Esophagus squamous epithelium (tissue), 5 donors: ENCODE measurements at regions of chr3 and their contacts with region 1.

Region 1: DNA sequence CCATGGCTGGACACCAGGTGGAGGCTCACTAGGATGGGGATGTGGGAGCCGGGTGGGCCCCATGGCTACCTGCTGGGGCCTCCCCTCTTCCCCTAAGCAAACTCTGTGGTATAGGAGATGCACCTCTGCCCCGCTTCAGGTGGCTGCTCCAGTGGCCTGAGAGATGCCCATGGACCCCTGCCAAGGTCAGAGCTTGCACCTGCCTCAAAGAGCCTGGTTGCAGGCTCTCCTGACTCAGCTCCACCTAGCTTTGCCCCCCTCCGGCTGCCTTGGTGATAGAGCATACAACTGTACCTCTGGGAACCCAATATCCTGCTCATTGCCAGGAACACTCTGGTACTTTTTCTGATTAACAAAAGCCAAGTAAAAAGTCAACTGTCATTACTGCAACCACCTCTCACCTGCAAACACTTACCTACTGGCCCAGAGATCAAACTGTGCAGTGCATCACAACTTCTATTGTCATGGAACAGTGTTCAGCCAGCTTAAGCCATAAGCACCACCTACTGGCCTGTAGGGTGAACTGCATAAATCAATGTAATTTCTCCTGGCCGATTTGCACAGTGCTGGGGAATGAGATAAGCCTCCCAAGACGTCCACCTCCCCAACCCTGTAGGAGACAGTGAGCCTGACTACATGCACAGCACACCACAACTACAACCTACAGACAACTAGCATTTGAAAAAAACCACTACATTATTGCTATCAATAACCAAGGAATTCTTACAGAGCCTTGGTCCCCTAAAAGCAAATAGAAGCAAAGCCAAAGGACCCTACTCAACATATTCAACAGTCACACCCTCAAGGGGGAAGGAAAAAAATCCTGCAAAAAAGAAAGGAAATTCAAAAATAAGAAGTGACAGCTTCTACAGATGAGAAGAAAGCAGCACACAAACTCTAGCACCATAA is 352.4 kb upstream of the ARHGEF26 start:
- DNase-seq: no peak
- H3K4me3 ChIP-seq: no peak overlapping the region
- H3K27ac ChIP-seq: no peak overlapping the region
- H3K4me1 ChIP-seq: peaks cover 0 to 25% (median 5%) of the 10 kb centered on the region in 3 donors
- H3K27me3 ChIP-seq: no peaks in the 10 kb centered on the region
- CTCF ChIP-seq: peak; percentile 56 to 85 (median 78)
- POLR2A ChIP-seq: no peak

Region 2: GRCh38 chr3:153038779-153039178 is 730.0 kb before region 1 on chr3:
- intact Hi-C with region 1: loop called (anchors 10 kb)
- DNase-seq: no peak
- H3K4me3 ChIP-seq: no peak overlapping the region
- H3K27ac ChIP-seq: no peak overlapping the region
- H3K4me1 ChIP-seq: peaks cover 0 to 24% (median 12%) of the 10 kb centered on the region in 3 donors
- H3K27me3 ChIP-seq: no peaks in the 10 kb centered on the region
- CTCF ChIP-seq: no peak
- POLR2A ChIP-seq: no peak

Region 3: DNA sequence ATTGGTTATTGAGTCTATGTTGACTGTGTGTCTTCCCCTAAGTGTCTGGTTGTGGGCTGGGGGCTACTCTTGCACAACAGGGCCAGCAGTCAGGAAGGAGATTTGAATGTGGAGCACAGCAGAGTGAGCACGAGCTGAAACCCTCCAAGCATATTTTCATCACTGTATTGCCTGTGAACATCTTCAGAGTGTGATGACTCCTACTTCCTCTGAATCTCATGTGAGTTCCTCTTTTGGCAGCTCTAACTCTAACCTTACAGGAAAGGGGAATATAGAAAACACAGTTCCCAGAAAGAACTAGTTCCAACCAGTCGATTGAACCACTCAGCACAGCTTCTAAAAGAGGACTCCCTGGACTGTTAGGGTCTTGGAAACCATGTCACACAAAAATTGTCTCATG is 395.2 kb before region 1 on chr3:
- intact Hi-C with region 1: no loop called
- DNase-seq: no peak
- H3K4me3 ChIP-seq: no peak overlapping the region
- H3K27ac ChIP-seq: no peak overlapping the region
- H3K4me1 ChIP-seq: peaks cover 3 to 8% (median 4%) of the 10 kb centered on the region in 3 donors
- H3K27me3 ChIP-seq: no peaks in the 10 kb centered on the region
- CTCF ChIP-seq: no peak
- POLR2A ChIP-seq: no peak